ENCODE measurements at regions of chr2 and their contacts with region 1.

Region 1: DNA sequence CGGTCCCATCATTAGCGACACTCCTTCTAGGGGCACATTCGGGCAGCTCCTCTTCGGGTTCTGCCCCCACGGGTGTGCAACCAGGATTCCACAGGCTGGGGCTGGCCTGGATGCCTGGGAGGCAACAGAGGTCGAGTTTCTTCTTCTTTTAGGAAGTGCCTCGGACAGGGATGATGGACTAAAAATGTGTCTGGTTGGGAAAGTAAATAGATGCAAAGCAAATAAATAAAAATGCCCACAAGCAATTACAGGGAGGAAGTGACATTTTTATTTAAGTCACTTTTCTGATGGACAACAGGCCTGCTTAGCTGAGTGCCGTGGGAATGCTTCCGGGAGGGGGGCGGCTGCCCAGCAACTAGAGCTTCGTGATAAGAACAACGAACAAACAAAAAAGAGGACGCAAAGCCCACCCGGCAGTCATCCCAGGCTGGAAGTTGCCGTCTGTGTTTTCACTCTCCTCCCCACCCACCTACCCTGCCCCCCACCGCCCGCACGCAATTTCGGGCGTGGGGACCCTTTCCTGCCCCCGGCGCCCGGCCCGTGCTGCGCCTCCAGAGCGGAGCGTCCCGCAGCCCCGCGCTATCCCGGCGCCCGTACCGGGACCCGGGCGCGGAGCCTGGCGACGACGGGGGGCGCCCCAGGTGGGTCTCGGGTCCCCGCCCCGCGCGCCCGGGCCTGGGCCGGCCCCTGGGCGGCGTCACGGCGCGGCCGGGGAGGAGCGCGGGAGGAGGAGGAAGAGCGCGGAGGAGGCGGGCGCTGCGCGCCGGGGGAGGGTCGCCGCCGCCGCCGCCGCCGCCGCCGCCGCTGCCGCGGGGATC is 412 bp upstream of the NCK2 start:
- DNase-seq: peak; percentile 70
- H3K4me3 Mint-ChIP-seq: peak overlapping the region; percentile 76
- H3K27ac Mint-ChIP-seq: peak overlapping the region; percentile 86
- H3K4me1 Mint-ChIP-seq: peaks cover 80% of the 10 kb centered on the region
- H3K27me3 Mint-ChIP-seq: no peaks in the 10 kb centered on the region

Region 2: GRCh38 chr2:105582952-105583660 is 161.2 kb before region 1 on chr2:
- CTCF ChIA-PET with region 1: no interaction called
- POLR2A ChIA-PET with region 1: no interaction called
- intact Hi-C with region 1: loop called (anchors 1 kb)
- DNase-seq: no peak
- H3K4me3 Mint-ChIP-seq: no peak overlapping the region
- H3K27ac Mint-ChIP-seq: no peak overlapping the region
- H3K4me1 Mint-ChIP-seq: peaks cover 24% of the 10 kb centered on the region
- H3K27me3 Mint-ChIP-seq: no peaks in the 10 kb centered on the region

Region 3: GRCh38 chr2:105761931-105762515 is 17.7 kb after region 1 on chr2:
- CTCF ChIA-PET with region 1: interaction called, 9 read pairs
- POLR2A ChIA-PET with region 1: interaction called, 91 read pairs
- intact Hi-C with region 1: loop called (anchors 1 kb)
- DNase-seq: no peak
- H3K4me3 Mint-ChIP-seq: peak overlapping the region; percentile 48
- H3K27ac Mint-ChIP-seq: peak overlapping the region; percentile 92
- H3K4me1 Mint-ChIP-seq: peaks cover 95% of the 10 kb centered on the region
- H3K27me3 Mint-ChIP-seq: no peaks in the 10 kb centered on the region

Region 4: DNA sequence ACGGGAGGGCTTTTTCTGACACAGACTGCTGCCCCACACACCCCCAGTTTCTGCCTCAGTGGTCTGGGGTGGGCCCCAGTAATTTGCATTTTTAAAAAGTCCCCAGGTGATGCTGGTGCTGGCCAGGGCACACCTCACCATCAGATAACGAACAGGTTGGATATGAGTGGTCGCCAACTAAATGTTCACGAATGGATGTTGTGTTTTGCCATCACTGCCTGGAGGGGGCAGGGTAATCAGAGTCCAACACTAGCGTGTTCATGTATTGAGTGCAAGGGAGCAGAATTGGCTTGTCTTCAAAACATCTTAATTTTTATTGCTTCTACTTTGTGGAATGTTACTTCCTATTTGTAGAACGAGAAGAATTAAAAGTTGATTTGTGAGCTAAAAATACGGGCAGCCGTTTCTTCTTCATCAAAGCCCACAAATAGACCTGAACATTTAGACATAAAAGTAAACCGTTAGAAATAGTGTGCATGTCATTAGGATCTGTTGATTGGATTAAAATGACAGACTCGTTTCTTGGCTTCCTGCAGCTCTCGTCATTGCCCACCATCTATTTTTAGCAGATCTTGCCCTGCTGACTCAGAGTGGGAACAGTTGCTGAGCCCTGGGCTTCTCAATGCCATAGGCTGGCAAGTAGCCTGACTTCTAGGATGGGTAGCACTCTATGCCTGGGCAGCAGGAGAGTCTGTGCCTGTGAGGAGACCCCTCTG is 45.6 kb after region 1 on chr2:
- CTCF ChIA-PET with region 1: interaction called, 5 read pairs
- POLR2A ChIA-PET with region 1: interaction called, 15 read pairs
- intact Hi-C with region 1: no loop called
- DNase-seq: peak; percentile 87
- H3K4me3 Mint-ChIP-seq: peak overlapping the region; percentile 59
- H3K27ac Mint-ChIP-seq: peak overlapping the region; percentile 96
- H3K4me1 Mint-ChIP-seq: peaks cover 95% of the 10 kb centered on the region
- H3K27me3 Mint-ChIP-seq: no peaks in the 10 kb centered on the region

Region 5: GRCh38 chr2:105858868-105859693 is 114.8 kb after region 1 on chr2:
- CTCF ChIA-PET with region 1: interaction called, 4 read pairs
- POLR2A ChIA-PET with region 1: interaction called, 7 read pairs
- intact Hi-C with region 1: loop called (anchors 2 kb)
- DNase-seq: peak; percentile 53
- H3K4me3 Mint-ChIP-seq: peak overlapping the region; percentile 17
- H3K27ac Mint-ChIP-seq: peak overlapping the region; percentile 96
- H3K4me1 Mint-ChIP-seq: peaks cover 93% of the 10 kb centered on the region
- H3K27me3 Mint-ChIP-seq: no peaks in the 10 kb centered on the region

Region 6: DNA sequence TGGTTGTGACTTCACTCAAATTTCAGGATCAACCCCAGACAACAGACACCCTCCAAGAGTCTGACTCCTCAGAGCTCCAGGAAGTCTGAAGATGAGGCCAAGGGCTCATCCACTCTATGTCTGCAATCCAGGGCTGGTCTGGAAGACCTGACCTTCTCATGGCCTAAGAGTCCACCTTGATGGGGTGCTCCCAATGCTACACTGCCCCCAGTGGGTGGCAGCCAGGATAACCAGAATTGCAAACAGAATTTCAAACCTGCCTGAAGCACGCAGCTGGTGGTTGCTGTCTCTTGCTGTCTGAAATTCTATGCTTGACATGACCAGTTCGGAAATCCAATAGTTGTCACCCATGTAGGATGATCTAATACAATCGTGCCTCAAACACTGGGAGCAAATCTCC is 353.8 kb after region 1 on chr2:
- CTCF ChIA-PET with region 1: interaction called, 3 read pairs
- POLR2A ChIA-PET with region 1: interaction called, 3 read pairs
- intact Hi-C with region 1: loop called (anchors 2 kb)
- DNase-seq: peak; percentile 50
- H3K4me3 Mint-ChIP-seq: no peak overlapping the region
- H3K27ac Mint-ChIP-seq: no peak overlapping the region
- H3K4me1 Mint-ChIP-seq: peaks cover 36% of the 10 kb centered on the region
- H3K27me3 Mint-ChIP-seq: no peaks in the 10 kb centered on the region